CD4-positive, alpha-beta memory T cell (primary cell): ENCODE measurements at regions of chr1 and their contacts with region 1.

Region 1: DNA sequence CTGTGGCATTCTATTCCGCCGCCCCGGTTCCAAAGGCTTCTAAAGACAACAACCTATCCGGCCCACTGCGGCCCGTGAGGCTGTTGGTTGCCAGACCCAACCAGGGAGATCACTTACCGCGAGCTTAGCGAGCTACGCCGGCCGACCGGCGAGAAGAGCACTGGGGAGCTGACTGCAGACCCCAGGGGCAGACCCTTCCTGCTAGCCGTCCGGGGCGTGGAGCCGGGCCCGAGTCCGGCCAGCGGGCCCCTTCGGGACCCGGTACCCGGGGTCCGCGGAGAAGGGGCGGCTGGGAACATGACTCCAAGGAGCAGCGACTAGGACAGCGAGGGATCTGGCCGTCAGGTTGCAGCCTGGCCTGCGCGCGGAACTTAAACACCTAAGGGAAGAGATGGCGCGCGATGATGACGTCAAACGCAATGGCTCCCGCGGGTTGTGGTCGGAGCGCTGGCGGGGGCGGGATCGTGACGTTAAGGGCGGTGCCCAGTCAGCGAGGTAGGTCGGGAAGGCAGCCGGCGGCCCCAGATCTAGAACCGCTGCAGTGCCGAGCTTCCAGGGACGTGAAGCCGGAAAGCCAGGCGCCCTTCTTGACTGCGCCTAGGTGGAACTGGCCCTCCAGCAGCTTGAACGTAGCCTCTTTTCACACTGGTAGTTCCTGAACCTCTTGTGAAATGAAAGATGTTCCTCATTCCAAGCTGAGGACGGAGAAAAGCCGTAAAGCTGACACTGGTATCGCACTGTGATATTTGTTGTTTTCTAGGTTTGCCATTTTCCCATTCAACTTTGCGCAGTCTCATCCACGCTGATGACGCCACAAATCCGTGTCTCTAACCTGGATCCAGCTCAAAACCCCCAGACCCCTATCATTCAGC is at the start of gene NUP133:
- DNase-seq: peak; percentile 96 to 98 (median 96)
- H3K4me3 ChIP-seq: peak within 1 kb of the TSS; percentile 90 to 93
- H3K4me3 Mint-ChIP-seq: peak within 1 kb of the TSS; percentile 87 to 95 (median 92)
- H3K27ac ChIP-seq: peak within 1 kb of the TSS; percentile 87
- H3K27ac Mint-ChIP-seq: peak within 1 kb of the TSS; percentile 97 to 99 (median 98)
- H3K4me1 ChIP-seq: peaks cover 22% of the 10 kb centered on the region
- H3K4me1 Mint-ChIP-seq: peaks cover 19 to 40% (median 32%) of the 10 kb centered on the region in 4 donors
- H3K27me3 ChIP-seq: no peaks in the 10 kb centered on the region
- H3K27me3 Mint-ChIP-seq: peaks cover 0 to 2% of the 10 kb centered on the region in 2 donors
- total RNA-seq, gene NUP133: 45.8 to 48.4 TPM

Region 2: GRCh38 chr1:228109073-228109961 is 1398.9 kb before region 1 on chr1 and contains the start of gene MRPL55:
- CTCF ChIA-PET with region 1: no interaction called
- POLR2A ChIA-PET with region 1: no interaction called
- intact Hi-C with region 1: loop called (anchors 5 kb)
- DNase-seq: peak; percentile 97 to 99 (median 98)
- H3K4me3 ChIP-seq: peak within 1 kb of the TSS; percentile 68 to 76
- H3K4me3 Mint-ChIP-seq: peak within 1 kb of the TSS; percentile 89 to 98 (median 94)
- H3K27ac ChIP-seq: peak within 1 kb of the TSS; percentile 92
- H3K27ac Mint-ChIP-seq: peak within 1 kb of the TSS; percentile 92 to 98 (median 95)
- H3K4me1 ChIP-seq: peaks cover 21% of the 10 kb centered on the region
- H3K4me1 Mint-ChIP-seq: peaks cover 9 to 45% (median 26%) of the 10 kb centered on the region in 4 donors
- H3K27me3 ChIP-seq: no peaks in the 10 kb centered on the region
- H3K27me3 Mint-ChIP-seq: no peaks in the 10 kb centered on the region
- total RNA-seq, gene MRPL55: 57.8 to 64.5 TPM

Region 3: GRCh38 chr1:229270547-229271447 is 237.4 kb before region 1 on chr1 and contains the start of gene RAB4A:
- CTCF ChIA-PET with region 1: no interaction called
- POLR2A ChIA-PET with region 1: interaction called, 15 read pairs
- intact Hi-C with region 1: loop called (anchors 5 kb)
- DNase-seq: peak; percentile 66 to 79 (median 77)
- H3K4me3 ChIP-seq: peak within 1 kb of the TSS; percentile 72 to 76
- H3K4me3 Mint-ChIP-seq: peak within 1 kb of the TSS; percentile 94 to 99 (median 96)
- H3K27ac ChIP-seq: peak within 1 kb of the TSS; percentile 14
- H3K27ac Mint-ChIP-seq: peak within 1 kb of the TSS; percentile 80 to 97 (median 89)
- H3K4me1 ChIP-seq: peaks cover 32% of the 10 kb centered on the region
- H3K4me1 Mint-ChIP-seq: peaks cover 28 to 41% (median 33%) of the 10 kb centered on the region in 4 donors
- H3K27me3 ChIP-seq: no peaks in the 10 kb centered on the region
- H3K27me3 Mint-ChIP-seq: no peaks in the 10 kb centered on the region
- total RNA-seq, gene RAB4A: 43.7 to 44.9 TPM

Region 4: GRCh38 chr1:229341774-229342655 is 166.2 kb before region 1 on chr1:
- CTCF ChIA-PET with region 1: no interaction called
- POLR2A ChIA-PET with region 1: interaction called, 16 read pairs
- intact Hi-C with region 1: loop called (anchors 1 kb)
- DNase-seq: peak in 4 of 5 donors; percentile 85 to 89 (median 86)
- H3K4me3 ChIP-seq: peak overlapping the region; percentile 67 to 76
- H3K4me3 Mint-ChIP-seq: peak overlapping the region; percentile 87 to 95 (median 91)
- H3K27ac ChIP-seq: peak overlapping the region; percentile 68
- H3K27ac Mint-ChIP-seq: peak overlapping the region; percentile 81 to 94 (median 89)
- H3K4me1 ChIP-seq: peaks cover 55% of the 10 kb centered on the region
- H3K4me1 Mint-ChIP-seq: peaks cover 28 to 54% (median 43%) of the 10 kb centered on the region in 4 donors
- H3K27me3 ChIP-seq: no peaks in the 10 kb centered on the region
- H3K27me3 Mint-ChIP-seq: peaks cover 4 to 6% of the 10 kb centered on the region in 2 donors

Region 5: GRCh38 chr1:229479660-229480399 is 28.4 kb before region 1 on chr1:
- CTCF ChIA-PET with region 1: interaction called, 12 read pairs
- POLR2A ChIA-PET with region 1: no interaction called
- intact Hi-C with region 1: no loop called
- DNase-seq: no peak
- H3K4me3 ChIP-seq: no peak overlapping the region
- H3K4me3 Mint-ChIP-seq: no peak overlapping the region
- H3K27ac ChIP-seq: no peak overlapping the region
- H3K27ac Mint-ChIP-seq: peak overlapping the region in 3 of 7 donors; percentile 20 to 49 (median 48)
- H3K4me1 ChIP-seq: no peaks in the 10 kb centered on the region
- H3K4me1 Mint-ChIP-seq: peaks cover 5 to 13% (median 8%) of the 10 kb centered on the region in 4 donors
- H3K27me3 ChIP-seq: no peaks in the 10 kb centered on the region
- H3K27me3 Mint-ChIP-seq: no peaks in the 10 kb centered on the region

Region 6: DNA sequence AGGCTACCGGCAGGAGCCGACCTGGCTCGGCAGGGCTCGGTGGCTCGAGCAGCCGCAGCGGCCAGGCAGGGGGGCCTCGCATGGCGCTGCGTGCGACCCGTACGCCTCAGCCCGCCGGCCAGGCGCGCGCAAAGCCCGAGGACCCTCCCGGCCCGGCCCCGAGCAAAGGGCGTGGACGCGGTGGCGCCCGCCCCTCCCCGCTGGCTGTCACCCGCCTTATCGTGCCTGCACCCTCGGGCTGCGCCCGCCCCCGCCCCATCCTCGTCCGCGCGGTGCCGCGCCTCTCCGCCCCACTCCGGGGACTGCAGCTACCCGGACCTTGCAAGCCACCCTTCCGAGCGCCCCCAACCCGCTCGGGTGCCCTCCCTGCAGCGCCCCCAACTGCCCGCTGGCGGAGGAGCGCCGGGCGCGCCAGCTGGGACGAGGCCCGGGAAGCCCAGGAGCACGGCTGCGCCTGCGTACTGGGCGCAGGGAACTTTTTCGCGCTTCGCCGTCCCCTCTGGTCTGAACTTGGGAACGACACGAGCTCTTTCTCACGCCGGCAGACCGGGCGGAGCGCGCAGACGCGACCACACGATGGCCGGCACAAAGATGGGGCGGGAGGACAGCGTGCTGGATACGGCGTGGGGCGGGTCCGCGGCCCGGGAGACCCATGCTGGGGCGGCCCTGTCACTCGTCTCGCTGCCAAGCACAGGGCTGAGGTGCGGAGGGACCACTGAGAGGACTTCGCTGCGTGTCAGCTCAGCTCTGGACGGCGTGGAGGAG is 50.6 kb after region 1 on chr1 and contains the start of gene ABCB10:
- CTCF ChIA-PET with region 1: interaction called, 3 read pairs
- POLR2A ChIA-PET with region 1: interaction called, 32 read pairs
- intact Hi-C with region 1: loop called (anchors 1 kb)
- DNase-seq: peak; percentile 79 to 90 (median 82)
- H3K4me3 ChIP-seq: peak within 1 kb of the TSS; percentile 24 to 76
- H3K4me3 Mint-ChIP-seq: peak within 1 kb of the TSS; percentile 92 to 98 (median 96)
- H3K27ac ChIP-seq: peak within 1 kb of the TSS; percentile 46
- H3K27ac Mint-ChIP-seq: peak within 1 kb of the TSS; percentile 89 to 98 (median 93)
- H3K4me1 ChIP-seq: peaks cover 37% of the 10 kb centered on the region
- H3K4me1 Mint-ChIP-seq: peaks cover 28 to 50% (median 39%) of the 10 kb centered on the region in 4 donors
- H3K27me3 ChIP-seq: no peaks in the 10 kb centered on the region
- H3K27me3 Mint-ChIP-seq: no peaks in the 10 kb centered on the region
- total RNA-seq, gene ABCB10: 19.7 to 20.2 TPM

Region 7: DNA sequence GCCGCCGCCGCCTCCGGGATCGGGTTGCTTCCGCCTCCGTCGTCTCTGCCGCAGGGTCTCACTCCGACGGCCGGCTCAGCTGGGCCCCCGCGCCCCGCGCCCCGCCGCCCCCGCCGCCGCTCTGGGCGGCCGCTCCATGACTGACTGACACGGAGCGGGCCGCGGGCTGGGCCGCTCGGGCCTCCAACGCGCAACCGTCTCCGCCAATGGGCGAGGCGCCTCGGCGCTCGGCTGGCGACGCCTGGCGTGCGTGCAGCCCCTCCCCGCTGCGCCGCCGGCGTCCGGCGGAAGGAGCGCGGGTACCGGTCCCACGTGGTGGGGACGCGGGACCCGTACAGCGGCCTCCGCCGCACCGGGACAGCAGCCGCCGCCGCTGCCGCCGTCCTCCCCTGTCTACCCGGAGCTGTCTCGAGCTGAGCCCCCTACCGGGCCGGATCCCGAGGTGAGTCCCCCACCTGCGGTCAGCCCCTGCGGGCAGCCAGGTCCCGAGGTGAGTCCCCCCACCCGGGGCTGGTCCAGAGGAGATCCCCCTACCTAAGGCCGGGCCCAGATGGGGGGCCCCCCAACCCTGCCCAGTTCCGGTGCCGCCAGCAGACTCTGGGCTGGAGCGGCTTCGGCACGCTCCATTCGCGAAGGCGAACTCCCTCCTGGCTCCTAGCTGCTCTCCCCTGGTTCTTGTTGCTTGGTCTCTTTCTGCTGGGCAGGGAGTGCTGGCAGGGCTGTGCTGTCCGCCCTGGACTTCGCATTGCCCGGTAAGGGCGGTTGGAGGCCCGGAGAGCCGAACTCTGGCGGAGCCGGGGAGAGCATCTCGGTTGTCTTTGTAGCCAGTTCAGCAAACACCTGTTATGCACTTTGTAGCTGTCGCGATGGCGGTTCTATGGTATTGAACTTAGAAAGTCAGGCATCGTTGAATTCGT is 118.0 kb after region 1 on chr1 and contains the starts of genes TAF5L and URB2:
- CTCF ChIA-PET with region 1: no interaction called
- POLR2A ChIA-PET with region 1: interaction called, 4 read pairs
- intact Hi-C with region 1: loop called (anchors 2 kb)
- DNase-seq: peak; percentile 84 to 88 (median 87)
- H3K4me3 ChIP-seq: peak within 1 kb of the TSS; percentile 77 to 98
- H3K4me3 Mint-ChIP-seq: peak within 1 kb of the TSS; percentile 97 to 100 (median 99)
- H3K27ac ChIP-seq: peak within 1 kb of the TSS; percentile 63
- H3K27ac Mint-ChIP-seq: peak within 1 kb of the TSS; percentile 91 to 99 (median 97)
- H3K4me1 ChIP-seq: peaks cover 41% of the 10 kb centered on the region
- H3K4me1 Mint-ChIP-seq: peaks cover 33 to 67% (median 51%) of the 10 kb centered on the region in 4 donors
- H3K27me3 ChIP-seq: no peaks in the 10 kb centered on the region
- H3K27me3 Mint-ChIP-seq: no peaks in the 10 kb centered on the region
- total RNA-seq, gene TAF5L: 20.7 to 21.3 TPM
- total RNA-seq, gene URB2: 8.5 to 9.4 TPM